Adrenal gland (tissue), 19 donors: ENCODE measurements at regions of chr15 and their contacts with region 1.

Region 1: DNA sequence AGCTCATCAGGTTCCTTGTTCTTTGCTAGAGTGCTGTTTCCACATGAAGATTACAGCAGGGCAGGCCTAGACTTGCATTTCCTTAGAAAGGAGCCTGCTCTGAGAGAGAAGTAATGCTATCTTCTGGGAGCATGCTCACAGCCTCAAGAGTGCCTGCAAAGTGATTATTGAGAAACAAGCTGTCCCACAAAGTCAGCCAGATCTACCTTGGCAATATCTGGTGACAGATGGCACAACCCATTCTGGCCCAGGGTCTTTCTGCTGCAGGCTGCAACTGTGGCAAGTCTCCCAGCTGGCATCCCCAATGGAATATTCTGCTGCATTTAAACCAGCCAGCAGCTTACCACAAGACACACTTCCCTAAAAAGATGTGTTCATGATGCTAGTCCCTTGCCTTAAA is 29.3 kb downstream of the MTMR10 start:
- DNase-seq: no peak
- H3K4me3 ChIP-seq: no peak overlapping the region
- H3K27ac ChIP-seq: no peak overlapping the region
- H3K4me1 ChIP-seq: no peaks in the 10 kb centered on the region
- H3K27me3 ChIP-seq: no peaks in the 10 kb centered on the region
- CTCF ChIP-seq: no peak
- POLR2A ChIP-seq: no peak

Region 2: DNA sequence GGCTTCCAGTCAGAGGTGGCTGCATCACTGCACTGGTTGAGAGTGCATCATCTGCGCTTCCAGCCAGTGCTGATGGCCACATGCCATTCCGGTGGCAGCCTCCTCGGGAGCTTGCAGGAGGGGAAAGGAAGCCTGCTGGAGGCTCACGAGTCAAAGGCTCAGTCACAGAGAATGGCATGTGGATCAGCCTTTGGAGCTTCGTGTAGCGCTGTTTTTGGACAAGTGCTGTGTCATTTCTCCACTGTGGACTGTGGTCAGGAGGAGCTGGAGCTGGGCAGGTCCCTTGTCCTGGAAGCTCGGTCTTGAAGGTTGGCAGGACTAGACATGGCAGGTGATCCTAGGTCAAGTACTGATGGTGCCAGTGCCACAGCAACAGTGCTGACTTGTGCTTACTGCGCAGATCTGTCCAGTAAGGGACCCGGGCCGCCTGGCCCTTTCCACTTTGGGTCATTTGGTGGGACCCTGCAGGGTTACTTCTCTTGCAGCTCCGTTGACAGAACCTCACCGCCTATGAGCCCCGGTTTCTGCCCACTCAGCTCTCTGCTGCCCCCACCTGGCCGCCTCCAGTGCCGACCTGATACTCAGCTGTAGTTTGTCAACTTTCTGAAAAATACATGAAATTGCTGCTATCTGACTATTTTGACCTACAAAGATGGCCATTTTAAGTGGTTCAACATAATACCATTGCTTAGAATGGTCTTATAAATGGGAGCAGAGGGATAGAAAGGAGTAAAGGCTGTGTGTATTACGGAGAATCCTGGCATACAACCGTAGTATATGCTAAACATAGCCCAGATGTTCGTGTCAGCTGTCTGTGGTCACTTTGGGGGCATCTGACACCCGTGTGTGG is 167.1 kb after region 1 on chr15:
- intact Hi-C with region 1: loop called in 1 of 2 experiments (anchors 10 kb)
- DNase-seq: peak; percentile 56 to 83 (median 71)
- H3K4me3 ChIP-seq: no peak overlapping the region
- H3K27ac ChIP-seq: no peak overlapping the region
- H3K4me1 ChIP-seq: no peaks in the 10 kb centered on the region
- H3K27me3 ChIP-seq: no peaks in the 10 kb centered on the region
- CTCF ChIP-seq: peak; percentile 72 to 93 (median 81)
- POLR2A ChIP-seq: no peak

Region 3: GRCh38 chr15:31145271-31145911 is 183.3 kb after region 1 on chr15:
- intact Hi-C with region 1: no loop called
- DNase-seq: no peak
- H3K4me3 ChIP-seq: no peak overlapping the region
- H3K27ac ChIP-seq: no peak overlapping the region
- H3K4me1 ChIP-seq: no peaks in the 10 kb centered on the region
- H3K27me3 ChIP-seq: no peaks in the 10 kb centered on the region
- CTCF ChIP-seq: no peak
- POLR2A ChIP-seq: no peak